Calu3 (cell line): ENCODE measurements at regions of chr21 and their contacts with region 1.

Region 1: DNA sequence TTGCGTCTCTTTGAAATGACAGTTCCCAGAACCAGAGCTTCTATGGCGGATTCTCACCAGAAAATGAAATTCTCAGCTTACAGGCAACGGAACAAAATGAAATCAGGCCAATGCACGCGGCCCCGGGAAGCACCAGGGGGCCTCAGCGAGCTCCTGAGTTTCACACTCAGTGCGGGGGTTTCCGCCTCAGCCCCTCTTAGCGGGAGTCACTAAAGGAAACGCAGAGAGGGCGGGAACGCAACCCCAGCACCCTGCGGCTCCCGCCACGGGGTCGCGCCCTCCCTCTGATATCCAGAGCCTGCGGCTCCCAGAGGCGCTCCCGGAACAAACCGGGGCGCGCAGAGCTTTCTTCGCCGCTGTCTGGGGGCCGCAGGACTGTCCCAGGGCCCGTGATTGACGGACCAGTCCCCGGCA is 7.9 kb upstream of the COL6A1 start:
- DNase-seq: peak; percentile 69
- H3K4me3 Mint-ChIP-seq: peak overlapping the region; percentile 64
- H3K27ac Mint-ChIP-seq: no peak overlapping the region
- H3K4me1 Mint-ChIP-seq: peaks cover 11% of the 10 kb centered on the region
- H3K27me3 Mint-ChIP-seq: no peaks in the 10 kb centered on the region
- CTCF ChIP-seq: peak; percentile 30

Region 2: DNA sequence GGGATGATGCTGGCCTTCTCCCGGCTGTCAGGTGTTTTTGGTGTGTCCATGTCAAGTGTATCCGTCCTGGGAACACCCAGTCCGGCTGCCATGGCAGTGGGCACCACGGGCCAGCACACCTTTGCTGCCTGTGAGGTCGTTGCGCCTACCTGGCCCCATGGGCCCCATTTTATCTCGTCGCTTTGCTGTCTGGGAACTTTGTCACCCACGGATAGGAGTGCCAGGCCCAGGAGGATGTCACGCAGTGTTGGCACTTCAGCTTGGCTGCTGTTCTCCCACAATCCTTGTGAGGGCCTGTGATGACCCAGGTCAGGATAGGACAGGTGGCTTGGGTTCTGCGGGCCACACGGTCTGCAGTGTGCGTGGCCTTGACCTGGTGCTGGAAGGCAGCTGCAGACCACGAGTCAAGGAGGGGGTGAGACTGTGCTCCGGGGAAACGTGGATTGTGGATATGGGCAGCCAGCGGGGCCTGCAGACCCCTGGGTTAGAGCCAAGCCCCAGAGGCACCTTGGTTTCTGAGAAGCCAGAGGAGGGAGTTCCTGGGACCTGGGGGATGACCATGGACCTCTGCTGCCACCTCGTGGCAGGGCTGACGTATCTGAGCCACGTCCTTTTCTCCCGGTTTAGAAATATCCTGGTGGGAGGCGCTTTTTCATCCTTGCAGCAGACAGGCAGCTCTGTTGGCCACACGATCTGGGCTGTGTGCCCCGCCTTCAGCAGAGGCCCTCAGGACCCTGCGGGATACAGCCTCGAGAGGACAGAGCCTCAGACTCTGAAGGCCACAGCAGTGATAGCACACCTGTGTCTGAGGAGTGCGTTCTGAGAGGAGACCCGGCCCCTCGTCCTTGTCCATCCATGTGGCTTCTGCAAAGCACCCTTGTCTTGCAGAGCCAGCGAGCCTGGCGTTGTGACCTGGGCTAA is 153.2 kb before region 1 on chr21:
- CTCF ChIA-PET with region 1: no interaction called
- intact Hi-C with region 1: no loop called
- DNase-seq: peak; percentile 76
- H3K4me3 Mint-ChIP-seq: no peak overlapping the region
- H3K27ac Mint-ChIP-seq: no peak overlapping the region
- H3K4me1 Mint-ChIP-seq: peaks cover 12% of the 10 kb centered on the region
- H3K27me3 Mint-ChIP-seq: peaks cover 45% of the 10 kb centered on the region
- CTCF ChIP-seq: peak; percentile 67

Region 3: DNA sequence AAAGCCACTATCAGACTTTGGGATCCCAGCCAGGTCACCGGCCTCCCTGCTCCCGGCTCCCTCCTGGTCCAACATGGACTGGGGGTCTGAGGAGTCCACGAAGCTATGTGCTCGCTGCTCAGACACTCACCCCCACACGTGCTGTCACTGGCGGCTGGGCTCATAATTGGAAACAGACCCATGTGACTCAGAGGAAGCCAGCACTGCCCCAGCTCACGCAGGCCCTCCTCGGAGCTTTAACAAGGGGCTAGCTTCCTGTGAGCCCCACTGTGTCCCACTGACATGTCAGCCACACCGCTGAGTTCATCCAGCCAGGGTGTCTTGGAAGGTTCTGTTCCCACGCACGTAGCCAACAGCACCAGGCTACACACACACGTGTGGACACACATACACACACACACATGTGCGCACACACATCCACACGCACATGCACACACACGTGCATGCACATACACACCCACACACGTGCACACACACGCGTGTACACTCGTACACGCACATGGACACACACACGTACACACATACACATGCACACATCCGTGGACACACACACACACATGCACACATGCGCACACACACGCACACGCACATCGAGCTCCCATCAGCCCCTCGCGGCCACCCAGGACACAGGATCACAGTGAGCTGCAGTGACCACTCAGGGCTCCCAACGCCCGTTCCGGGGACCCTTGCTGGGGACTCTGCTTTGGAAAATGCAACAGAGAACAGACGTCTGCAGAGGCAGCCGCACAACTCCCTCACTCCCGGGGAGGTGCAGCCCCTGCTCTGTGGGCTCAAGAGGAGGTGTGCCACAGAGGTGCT is 105.9 kb after region 1 on chr21:
- CTCF ChIA-PET with region 1: no interaction called
- intact Hi-C with region 1: loop called (anchors 10 kb)
- DNase-seq: no peak
- H3K4me3 Mint-ChIP-seq: no peak overlapping the region
- H3K27ac Mint-ChIP-seq: no peak overlapping the region
- H3K4me1 Mint-ChIP-seq: no peaks in the 10 kb centered on the region
- H3K27me3 Mint-ChIP-seq: peaks cover 36% of the 10 kb centered on the region
- CTCF ChIP-seq: no peak

Region 4: DNA sequence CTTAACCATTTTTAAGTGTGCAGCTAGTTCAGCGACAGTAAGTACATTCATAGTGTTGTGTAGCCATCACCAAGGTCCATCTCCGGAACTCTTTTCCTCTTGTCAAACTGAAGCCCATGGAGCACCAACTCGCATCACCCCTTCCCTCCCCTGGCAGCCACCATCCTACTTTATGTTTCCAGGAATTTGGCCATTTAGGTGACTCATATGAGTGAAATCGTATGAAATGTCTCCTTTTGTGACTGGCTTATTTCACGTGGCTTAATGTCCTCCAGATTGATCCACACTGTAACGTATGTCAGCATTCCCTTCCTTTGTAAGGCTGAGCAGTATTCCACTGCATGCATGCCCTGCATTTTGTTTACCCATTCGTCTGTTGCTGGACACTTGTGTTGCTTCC is 126.8 kb after region 1 on chr21:
- CTCF ChIA-PET with region 1: no interaction called
- intact Hi-C with region 1: loop called (anchors 5 kb)
- DNase-seq: no peak
- H3K4me3 Mint-ChIP-seq: no peak overlapping the region
- H3K27ac Mint-ChIP-seq: no peak overlapping the region
- H3K4me1 Mint-ChIP-seq: no peaks in the 10 kb centered on the region
- H3K27me3 Mint-ChIP-seq: peaks cover 29% of the 10 kb centered on the region
- CTCF ChIP-seq: no peak

Region 5: GRCh38 chr21:46144464-46145070 is 170.9 kb after region 1 on chr21:
- CTCF ChIA-PET with region 1: interaction called, 20 read pairs
- intact Hi-C with region 1: loop called (anchors 5 kb)
- DNase-seq: no peak
- H3K4me3 Mint-ChIP-seq: peak overlapping the region; percentile 65
- H3K27ac Mint-ChIP-seq: peak overlapping the region; percentile 93
- H3K4me1 Mint-ChIP-seq: peaks cover 11% of the 10 kb centered on the region
- H3K27me3 Mint-ChIP-seq: peaks cover 15% of the 10 kb centered on the region
- CTCF ChIP-seq: no peak